A673 (cell line): ENCODE measurements at regions of chr3 and their contacts with region 1.

Region 1: GRCh38 chr3:131231710-131232389 is 149.7 kb upstream of the NUDT16 start:
- DNase-seq: peak; percentile 80
- H3K4me3 ChIP-seq: no peak overlapping the region
- H3K27ac ChIP-seq: peak overlapping the region; percentile 70
- H3K4me1 ChIP-seq: peaks cover 28% of the 10 kb centered on the region
- H3K27me3 ChIP-seq: no peaks in the 10 kb centered on the region
- CTCF ChIP-seq: peak; percentile 41; the same call in 1 of the 2 replicates

Region 2: DNA sequence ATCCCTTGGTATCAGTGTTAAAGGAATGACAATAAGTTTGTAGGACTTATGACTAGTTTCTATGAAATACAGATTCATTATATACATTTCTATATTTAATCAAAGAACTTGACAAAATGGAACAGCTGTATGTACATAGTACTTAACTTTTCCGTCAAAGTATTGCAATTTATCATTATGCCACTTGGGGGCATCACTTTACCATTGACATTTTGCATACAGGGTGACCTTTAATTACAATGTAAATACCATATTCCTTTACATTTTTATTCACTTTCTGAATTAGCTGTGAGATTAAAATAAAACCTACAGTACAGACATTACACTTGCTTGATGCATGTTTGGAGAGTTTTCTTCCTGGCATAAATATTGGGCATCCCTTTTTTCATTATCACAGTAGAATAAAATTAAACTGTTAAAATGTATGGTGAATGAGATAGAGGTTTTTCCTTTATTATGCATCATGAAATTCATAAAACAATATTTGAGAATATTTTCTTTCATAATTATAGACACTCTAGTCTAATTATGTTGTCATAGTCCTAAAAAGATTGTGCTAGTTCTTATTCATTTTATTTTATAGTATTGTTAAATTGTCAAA is 198.3 kb before region 1 on chr3:
- CTCF ChIA-PET with region 1: no interaction called
- POLR2A ChIA-PET with region 1: no interaction called
- intact Hi-C with region 1: loop called (anchors 5 kb)
- DNase-seq: peak; percentile 76
- H3K4me3 ChIP-seq: no peak overlapping the region
- H3K27ac ChIP-seq: no peak overlapping the region
- H3K4me1 ChIP-seq: peaks cover 15% of the 10 kb centered on the region
- H3K27me3 ChIP-seq: no peaks in the 10 kb centered on the region
- CTCF ChIP-seq: peak; percentile 83

Region 3: GRCh38 chr3:131250466-131250865 is 18.6 kb after region 1 on chr3:
- CTCF ChIA-PET with region 1: no interaction called
- POLR2A ChIA-PET with region 1: no interaction called
- intact Hi-C with region 1: no loop called
- DNase-seq: no peak
- H3K4me3 ChIP-seq: no peak overlapping the region
- H3K27ac ChIP-seq: no peak overlapping the region
- H3K4me1 ChIP-seq: no peaks in the 10 kb centered on the region
- H3K27me3 ChIP-seq: no peaks in the 10 kb centered on the region
- CTCF ChIP-seq: no peak

Region 4: DNA sequence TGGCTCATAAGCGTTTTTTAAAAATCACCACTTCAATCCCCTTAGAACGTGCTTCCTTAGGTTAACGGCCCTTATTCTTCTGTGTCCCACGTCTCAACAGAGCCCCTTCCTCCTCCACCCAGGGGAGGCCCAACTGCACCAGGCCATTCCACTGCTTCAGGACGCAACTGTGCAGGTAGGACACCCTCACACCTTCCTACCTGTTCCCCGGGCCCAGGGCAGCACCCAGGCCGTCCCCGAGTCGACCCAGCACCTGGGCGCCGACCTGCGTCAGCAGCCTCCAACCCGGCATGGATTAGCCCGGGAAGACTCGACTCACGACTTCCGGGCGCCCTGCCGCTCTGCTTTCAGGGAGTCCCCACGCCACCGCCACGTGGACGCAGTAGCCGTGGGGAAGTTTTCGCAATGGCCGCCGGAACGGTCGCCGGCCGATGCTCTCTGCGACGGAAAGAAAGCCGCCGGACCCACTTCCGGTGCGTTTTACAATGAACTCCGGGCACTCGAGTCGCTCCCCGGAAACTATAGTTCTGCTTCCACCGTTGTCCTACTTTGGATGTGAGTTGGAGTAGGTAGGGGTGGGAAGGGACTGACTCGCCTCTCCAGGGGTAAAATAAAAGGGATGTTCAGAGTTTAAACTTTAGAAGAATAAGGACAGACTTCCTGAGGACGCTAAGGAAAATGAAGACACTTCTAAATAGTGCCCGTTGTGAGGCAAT is 270.8 kb after region 1 on chr3 and contains the start of gene MRPL3:
- CTCF ChIA-PET with region 1: no interaction called
- POLR2A ChIA-PET with region 1: no interaction called
- intact Hi-C with region 1: loop called (anchors 2 kb)
- DNase-seq: peak; percentile 96
- H3K4me3 ChIP-seq: peak within 1 kb of the TSS; percentile 98
- H3K27ac ChIP-seq: peak within 1 kb of the TSS; percentile 94
- H3K4me1 ChIP-seq: peaks cover 21% of the 10 kb centered on the region
- H3K27me3 ChIP-seq: peaks cover 7% of the 10 kb centered on the region
- CTCF ChIP-seq: no peak
- total RNA-seq, gene MRPL3: 137 TPM in 2 replicates